ENCODE measurements at regions of chr5 and their contacts with region 1.

Region 1: DNA sequence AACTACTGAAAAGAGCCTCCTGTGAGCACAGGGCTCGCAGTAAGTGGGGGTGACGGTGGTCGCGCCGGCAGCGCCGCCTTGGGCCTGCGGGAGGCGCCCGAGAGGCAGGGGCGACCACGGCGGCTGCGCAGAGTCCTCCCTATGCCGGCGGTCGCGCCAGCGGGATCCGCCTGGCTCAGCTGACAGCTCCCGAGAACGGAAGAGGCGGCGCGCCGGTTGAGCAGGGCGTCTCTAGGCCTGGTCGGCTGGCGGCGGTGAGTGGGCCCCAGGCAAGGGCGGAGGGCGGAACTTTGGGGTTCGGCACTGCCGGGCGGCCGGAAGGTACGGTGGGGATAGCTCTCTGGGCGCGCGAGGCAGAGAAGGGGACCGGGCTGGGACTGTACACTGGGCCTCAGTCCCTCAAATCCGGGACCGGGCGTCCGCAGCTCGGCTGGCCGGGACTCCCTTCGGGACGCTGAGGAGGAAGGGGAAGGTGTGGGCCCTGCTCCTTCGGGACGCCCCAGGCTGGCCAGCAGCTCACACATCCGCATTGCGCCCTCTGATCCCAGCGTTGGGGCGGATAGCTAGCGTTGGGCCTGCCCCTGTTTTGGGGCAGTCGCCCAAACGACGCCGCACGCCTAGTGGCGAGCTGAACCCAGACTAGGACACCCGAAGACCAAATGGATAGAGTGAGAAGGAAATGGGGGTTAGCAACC is at the start of gene RNF14:
- DNase-seq: peak; percentile 96
- H3K4me3 Mint-ChIP-seq: peak within 1 kb of the TSS; percentile 93
- H3K27ac Mint-ChIP-seq: peak within 1 kb of the TSS; percentile 93
- H3K4me1 Mint-ChIP-seq: peaks cover 40% of the 10 kb centered on the region
- H3K27me3 Mint-ChIP-seq: no peaks in the 10 kb centered on the region
- total RNA-seq, gene RNF14: 32.5 to 35.7 TPM

Region 2: GRCh38 chr5:141878711-141879425 is 90.2 kb before region 1 on chr5:
- CTCF ChIA-PET with region 1: interaction called, 23 read pairs
- POLR2A ChIA-PET with region 1: interaction called, 7 read pairs
- DNase-seq: peak; percentile 89
- H3K4me3 Mint-ChIP-seq: peak overlapping the region; percentile 70
- H3K27ac Mint-ChIP-seq: no peak overlapping the region
- H3K4me1 Mint-ChIP-seq: peaks cover 29% of the 10 kb centered on the region
- H3K27me3 Mint-ChIP-seq: peaks cover 84% of the 10 kb centered on the region

Region 3: DNA sequence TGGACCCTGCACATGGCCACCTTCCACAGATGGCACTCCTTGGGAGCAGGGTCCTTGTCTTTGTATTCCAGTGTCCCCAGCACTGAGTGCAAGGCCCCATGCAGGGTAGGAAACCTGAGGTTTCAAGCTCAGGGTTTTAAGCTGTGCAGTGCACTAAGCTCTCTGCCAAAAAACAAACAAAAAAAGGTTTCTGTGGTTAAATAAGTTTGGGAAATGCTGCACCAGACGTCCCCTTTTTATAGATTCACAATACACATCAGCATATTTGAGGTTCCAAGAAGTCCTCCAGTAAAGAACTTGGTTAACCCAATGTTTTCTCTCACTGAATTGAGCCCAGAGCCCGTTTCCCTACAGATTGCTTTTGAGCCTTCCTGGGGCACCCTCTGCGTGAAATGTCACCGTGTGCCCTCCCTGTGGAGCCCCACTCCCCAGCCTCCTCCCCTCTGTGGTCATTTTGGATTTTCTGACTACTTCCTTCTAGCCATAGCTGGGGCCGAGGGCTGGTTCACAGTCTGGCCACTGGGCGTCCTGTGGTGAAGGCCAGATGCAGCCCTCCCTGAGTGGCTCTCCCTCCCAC is 28.3 kb before region 1 on chr5:
- CTCF ChIA-PET with region 1: interaction called, 15 read pairs
- POLR2A ChIA-PET with region 1: interaction called, 12 read pairs
- DNase-seq: no peak
- H3K4me3 Mint-ChIP-seq: no peak overlapping the region
- H3K27ac Mint-ChIP-seq: peak overlapping the region; percentile 52
- H3K4me1 Mint-ChIP-seq: peaks cover 23% of the 10 kb centered on the region
- H3K27me3 Mint-ChIP-seq: no peaks in the 10 kb centered on the region

Region 4: DNA sequence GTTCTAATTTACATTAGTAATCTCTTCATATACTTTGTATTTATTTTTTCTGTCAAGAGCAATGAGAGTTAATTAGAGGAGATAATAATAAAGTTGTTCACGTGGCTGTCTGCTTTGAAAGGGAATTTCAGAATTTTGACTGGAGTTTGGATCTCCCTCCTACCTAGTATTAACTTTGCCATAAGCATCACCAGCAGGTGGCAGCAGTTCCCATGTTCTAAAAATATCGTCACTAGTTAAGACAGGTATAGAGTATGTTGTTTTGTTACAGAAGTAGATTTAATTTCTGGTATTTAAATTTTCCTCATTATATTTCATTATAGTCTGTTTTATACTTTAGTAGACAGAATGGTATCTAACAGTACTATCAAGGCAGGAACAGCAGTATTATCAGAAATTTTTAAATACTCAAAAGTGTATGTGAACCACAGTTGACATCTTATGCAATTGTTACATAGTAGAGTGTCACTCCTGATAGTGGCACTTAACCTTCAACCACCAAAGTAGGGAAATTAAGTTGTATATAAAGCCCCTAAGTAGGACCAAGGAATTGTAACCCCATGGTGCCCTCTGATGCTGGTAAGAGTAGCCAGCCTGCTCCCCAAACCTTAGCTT is 23.4 kb after region 1 on chr5:
- CTCF ChIA-PET with region 1: interaction called, 47 read pairs
- POLR2A ChIA-PET with region 1: interaction called, 15 read pairs
- DNase-seq: peak; percentile 79
- H3K4me3 Mint-ChIP-seq: no peak overlapping the region
- H3K27ac Mint-ChIP-seq: no peak overlapping the region
- H3K4me1 Mint-ChIP-seq: peaks cover 2% of the 10 kb centered on the region
- H3K27me3 Mint-ChIP-seq: no peaks in the 10 kb centered on the region

Region 5: DNA sequence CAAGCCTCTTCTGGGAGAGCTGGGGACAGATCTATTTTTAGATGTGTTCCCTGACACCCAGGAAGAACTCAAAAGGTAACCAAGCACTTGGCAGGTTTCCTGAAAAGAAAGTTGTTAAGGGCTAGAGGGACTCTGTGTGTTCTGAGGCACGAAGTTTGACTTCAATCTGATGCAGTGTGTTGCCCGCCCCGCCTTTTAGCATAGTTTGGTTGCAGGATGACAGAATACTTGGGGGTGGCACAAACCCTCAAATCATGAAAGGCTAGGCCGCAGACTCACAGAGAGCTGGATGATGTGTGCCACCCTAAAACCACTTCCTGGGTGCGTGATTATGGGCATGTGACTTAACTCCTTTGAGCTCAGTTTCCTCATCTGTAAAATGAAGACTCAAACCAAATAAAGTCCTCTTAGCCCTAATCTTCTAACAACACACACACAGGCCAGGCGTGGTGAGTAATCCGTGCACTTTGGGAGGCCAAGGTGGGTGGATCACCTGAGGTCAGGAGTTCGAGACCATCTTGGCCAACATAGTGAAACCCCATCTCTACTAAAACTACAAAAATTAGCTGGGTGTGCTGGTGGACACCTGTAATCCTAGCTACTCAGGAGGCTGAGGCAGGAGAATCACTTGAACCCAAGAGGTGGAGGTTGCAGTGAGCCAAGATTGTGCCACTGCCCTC is 126.7 kb after region 1 on chr5:
- CTCF ChIA-PET with region 1: interaction called, 9 read pairs
- POLR2A ChIA-PET with region 1: interaction called, 10 read pairs
- DNase-seq: peak; percentile 87
- H3K4me3 Mint-ChIP-seq: peak overlapping the region; percentile 7
- H3K27ac Mint-ChIP-seq: peak overlapping the region; percentile 89
- H3K4me1 Mint-ChIP-seq: peaks cover 37% of the 10 kb centered on the region
- H3K27me3 Mint-ChIP-seq: no peaks in the 10 kb centered on the region